ENCODE measurements at regions of chr14 and their contacts with region 1.

Region 1: DNA sequence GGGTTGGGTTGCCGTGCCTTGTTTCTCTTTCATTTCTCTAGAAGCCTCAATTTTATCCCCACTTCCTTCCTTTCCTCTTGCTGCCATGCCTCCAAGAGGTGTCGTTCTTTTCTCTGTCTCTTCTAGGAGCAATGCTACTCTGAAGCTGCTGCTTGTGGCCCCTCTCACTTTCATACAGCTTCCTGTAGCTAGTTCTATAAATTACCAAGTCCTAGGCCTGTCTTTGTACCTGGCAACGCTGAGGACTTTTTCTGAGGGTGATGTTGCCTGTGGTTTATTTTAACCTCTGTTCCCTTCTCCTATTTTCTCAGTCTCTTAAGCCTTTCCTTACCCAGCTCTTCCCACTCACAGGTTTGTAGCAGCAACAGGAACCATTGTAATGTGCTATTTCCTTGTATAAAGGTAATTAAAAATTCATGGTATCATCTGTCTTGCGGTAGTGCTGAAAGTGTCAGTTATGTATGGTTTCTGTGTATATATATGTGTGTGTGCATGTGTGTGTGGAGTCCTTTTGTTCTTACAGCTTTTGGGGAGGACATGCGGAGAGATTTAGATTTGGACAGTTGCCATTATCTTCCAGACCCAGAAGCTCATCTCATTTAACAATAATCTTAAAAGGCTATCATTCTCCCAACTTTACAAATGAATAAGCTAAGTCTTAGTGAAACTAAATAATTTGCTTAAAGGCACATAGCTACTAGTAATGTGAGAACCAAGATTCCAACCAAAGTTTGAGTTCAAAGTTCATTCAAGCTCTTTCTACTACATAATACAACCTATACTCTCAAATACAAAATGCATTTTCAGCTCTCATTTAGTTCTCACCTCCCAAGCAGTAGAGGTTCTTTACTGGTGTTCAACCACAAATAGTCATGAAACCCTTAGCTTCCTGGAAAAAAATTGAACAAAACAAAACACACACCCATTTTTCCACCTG is 43.8 kb downstream of the DDHD1 start:
- DNase-seq: peak; percentile 71 to 89 (median 89)
- H3K4me3 ChIP-seq: peak overlapping the region in 6 of 7 experiments; percentile 60 to 87 (median 76)
- H3K27ac ChIP-seq: peak overlapping the region; percentile 77 to 87
- H3K4me1 ChIP-seq: peaks cover 10 to 37% (median 22%) of the 10 kb centered on the region in 4 experiments
- H3K27me3 ChIP-seq: no peaks in the 10 kb centered on the region

Region 2: DNA sequence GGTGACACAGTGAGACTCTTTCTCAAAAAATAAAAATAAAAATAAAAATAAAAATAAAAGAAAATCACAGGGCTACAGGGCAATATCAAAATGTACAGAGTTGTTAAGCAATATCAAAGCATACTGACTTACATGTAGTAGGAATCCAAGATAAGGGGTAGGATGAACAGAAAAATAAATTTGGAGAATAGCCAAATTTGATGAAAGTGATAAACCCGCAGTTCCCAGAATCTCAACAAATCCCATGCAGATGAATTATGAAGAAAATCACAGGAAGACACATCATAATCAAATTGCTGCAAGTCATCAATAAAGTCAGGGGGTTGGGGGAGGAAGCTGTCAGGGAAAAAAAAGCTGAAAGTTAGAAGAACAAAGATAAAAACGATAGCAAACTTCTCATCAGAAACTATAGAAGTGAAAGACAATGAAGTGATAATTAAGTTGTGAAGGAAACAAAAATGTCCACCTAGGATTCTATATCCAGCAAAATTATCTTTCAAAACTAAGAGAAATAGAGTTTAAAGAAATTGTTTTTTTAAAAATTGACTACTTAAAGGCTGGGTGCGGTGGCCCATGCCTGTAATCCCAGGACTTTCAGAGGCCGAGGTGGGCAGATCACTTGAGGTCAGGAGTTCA is 28.3 kb after region 1 on chr14:
- CTCF ChIA-PET with region 1: no interaction called
- POLR2A ChIA-PET with region 1: no interaction called
- DNase-seq: peak in 2 of 3 donors; percentile 48 to 62
- H3K4me3 ChIP-seq: no peak overlapping the region
- H3K27ac ChIP-seq: no peak overlapping the region
- H3K4me1 ChIP-seq: no peaks in the 10 kb centered on the region
- H3K27me3 ChIP-seq: no peaks in the 10 kb centered on the region

Region 3: GRCh38 chr14:53152890-53153701 is 43.7 kb after region 1 on chr14 and contains the start of gene DDHD1:
- CTCF ChIA-PET with region 1: interaction called, 12 read pairs
- POLR2A ChIA-PET with region 1: no interaction called
- DNase-seq: peak; percentile 86 to 93 (median 93)
- H3K4me3 ChIP-seq: peak within 1 kb of the TSS; percentile 72 to 90 (median 84)
- H3K27ac ChIP-seq: peak within 1 kb of the TSS; percentile 48 to 69
- H3K4me1 ChIP-seq: peaks cover 16 to 47% (median 27%) of the 10 kb centered on the region in 4 experiments
- H3K27me3 ChIP-seq: no peaks in the 10 kb centered on the region

Region 4: DNA sequence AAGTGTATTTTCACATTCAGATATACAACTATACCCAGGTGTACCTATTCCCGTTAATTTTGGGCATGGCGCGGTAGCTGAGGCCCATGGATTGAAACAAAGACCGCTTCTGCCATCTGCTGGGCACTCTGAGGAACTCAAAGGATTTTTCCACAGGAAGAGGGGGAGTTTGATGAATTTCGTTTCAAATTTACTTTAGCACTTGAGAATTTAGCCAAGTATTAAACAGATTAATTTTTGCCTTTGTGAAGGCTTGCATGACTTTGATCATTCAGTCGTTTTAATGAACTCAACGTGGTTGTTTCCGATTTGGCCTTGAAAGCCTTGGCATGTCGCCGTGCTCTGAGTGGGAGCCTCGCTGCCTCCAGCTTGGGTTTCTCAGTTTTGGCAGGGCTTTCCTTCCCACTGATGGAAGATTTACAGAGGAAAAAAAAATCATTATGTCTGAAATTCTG is 196.9 kb after region 1 on chr14:
- CTCF ChIA-PET with region 1: no interaction called
- POLR2A ChIA-PET with region 1: no interaction called
- DNase-seq: peak; percentile 46 to 67 (median 60)
- H3K4me3 ChIP-seq: peak overlapping the region in 6 of 7 experiments; percentile 52 to 83 (median 66)
- H3K27ac ChIP-seq: no peak overlapping the region
- H3K4me1 ChIP-seq: peaks cover 0 to 8% (median 3%) of the 10 kb centered on the region in 4 experiments
- H3K27me3 ChIP-seq: no peaks in the 10 kb centered on the region